ENCODE measurements at regions of chr15 and their contacts with region 1.

Region 1: DNA sequence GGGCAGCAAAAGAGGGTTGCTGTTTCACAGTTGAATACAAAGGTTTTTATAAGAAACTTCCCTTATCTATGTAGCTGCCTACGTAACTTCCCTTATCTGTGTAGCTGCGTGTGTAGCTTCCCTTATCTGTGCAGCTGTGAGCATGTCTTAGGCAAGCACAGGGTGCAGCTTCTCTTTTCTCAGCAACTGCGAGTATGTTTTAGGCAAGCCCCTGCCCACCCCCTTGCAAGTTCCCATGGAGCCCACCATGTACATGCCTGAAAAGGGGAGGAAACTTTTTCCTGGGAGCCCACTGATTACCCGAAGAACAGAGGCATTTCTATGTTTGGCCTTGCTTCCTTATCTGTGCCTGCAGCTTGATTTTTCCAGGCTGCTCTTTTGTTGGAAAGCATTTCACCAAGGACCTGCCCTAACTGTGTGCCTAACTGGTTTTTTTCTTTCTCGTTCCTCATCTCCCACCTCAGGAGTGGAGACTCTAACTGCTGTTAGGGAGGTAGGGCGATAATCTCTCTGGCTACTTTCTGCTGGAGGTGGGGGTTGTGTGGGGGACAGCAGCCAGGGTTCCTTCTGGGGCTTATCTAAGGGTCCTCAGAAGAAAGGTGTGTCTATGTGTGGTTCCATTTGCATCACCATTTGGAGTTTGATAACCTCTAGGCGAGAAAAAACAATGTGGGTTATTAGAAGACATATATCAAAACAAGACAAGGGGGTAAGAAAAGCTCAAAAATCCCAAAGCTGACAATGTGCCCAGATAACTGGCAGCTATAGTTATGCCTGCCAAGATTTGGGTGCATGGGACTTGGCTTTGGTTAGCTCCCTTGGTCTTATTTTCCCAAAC is 26.0 kb downstream of the SORD start:
- DNase-seq: no peak
- ATAC-seq: peak; percentile 87
- H3K4me3 Mint-ChIP-seq: peak overlapping the region; percentile 78
- H3K27ac Mint-ChIP-seq: peak overlapping the region; percentile 98
- H3K4me1 Mint-ChIP-seq: peaks cover 39% of the 10 kb centered on the region
- H3K27me3 Mint-ChIP-seq: no peaks in the 10 kb centered on the region
- CTCF ChIP-seq: no peak

Region 2: GRCh38 chr15:45022871-45023658 is 25.9 kb before region 1 on chr15 and contains the start of gene SORD:
- CTCF ChIA-PET with region 1: no interaction called
- POLR2A ChIA-PET with region 1: interaction called, 12 read pairs
- intact Hi-C with region 1: loop called (anchors 1 kb)
- DNase-seq: peak; percentile 91
- ATAC-seq: peak; percentile 100
- H3K4me3 Mint-ChIP-seq: peak within 1 kb of the TSS; percentile 89
- H3K27ac Mint-ChIP-seq: no peak within 1 kb of the TSS
- H3K4me1 Mint-ChIP-seq: peaks cover 27% of the 10 kb centered on the region
- H3K27me3 Mint-ChIP-seq: peaks cover 15% of the 10 kb centered on the region
- CTCF ChIP-seq: no peak
- total RNA-seq, gene SORD: 15.1 and 15.5 TPM in 2 replicates

Region 3: GRCh38 chr15:45037936-45038335 is 11.1 kb before region 1 on chr15:
- CTCF ChIA-PET with region 1: no interaction called
- POLR2A ChIA-PET with region 1: interaction called, 10 read pairs
- intact Hi-C with region 1: no loop called
- DNase-seq: no peak
- ATAC-seq: no peak
- H3K4me3 Mint-ChIP-seq: no peak overlapping the region
- H3K27ac Mint-ChIP-seq: peak overlapping the region; percentile 31
- H3K4me1 Mint-ChIP-seq: peaks cover 35% of the 10 kb centered on the region
- H3K27me3 Mint-ChIP-seq: no peaks in the 10 kb centered on the region
- CTCF ChIP-seq: no peak

Region 4: DNA sequence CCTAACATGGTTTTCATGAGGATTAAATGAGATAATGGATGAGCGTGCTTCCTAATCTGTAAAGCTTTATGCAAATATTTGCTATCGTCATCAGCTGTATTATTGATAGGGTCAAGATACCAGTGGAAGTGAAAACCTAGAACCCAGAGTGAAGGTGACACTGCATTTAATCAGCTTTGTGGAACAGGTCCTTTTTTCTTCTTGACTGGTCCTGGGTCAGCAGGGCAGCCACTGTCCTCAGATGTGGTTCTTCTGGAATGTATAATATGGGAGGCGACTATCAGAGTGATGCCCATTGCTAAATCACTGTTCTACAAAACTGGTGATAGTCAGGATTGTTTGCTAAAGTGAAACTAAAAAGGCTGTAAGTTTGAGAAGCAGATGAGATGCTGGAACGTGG is 15.4 kb after region 1 on chr15:
- CTCF ChIA-PET with region 1: no interaction called
- POLR2A ChIA-PET with region 1: no interaction called
- intact Hi-C with region 1: no loop called
- DNase-seq: no peak
- ATAC-seq: no peak
- H3K4me3 Mint-ChIP-seq: no peak overlapping the region
- H3K27ac Mint-ChIP-seq: no peak overlapping the region
- H3K4me1 Mint-ChIP-seq: peaks cover 10% of the 10 kb centered on the region
- H3K27me3 Mint-ChIP-seq: no peaks in the 10 kb centered on the region
- CTCF ChIP-seq: no peak

Region 5: GRCh38 chr15:45391746-45392583 is 343.0 kb after region 1 on chr15:
- CTCF ChIA-PET with region 1: no interaction called
- POLR2A ChIA-PET with region 1: no interaction called
- intact Hi-C with region 1: loop called (anchors 5 kb)
- DNase-seq: no peak
- ATAC-seq: peak; percentile 93
- H3K4me3 Mint-ChIP-seq: peak overlapping the region; percentile 30
- H3K27ac Mint-ChIP-seq: peak overlapping the region; percentile 80
- H3K4me1 Mint-ChIP-seq: peaks cover 22% of the 10 kb centered on the region
- H3K27me3 Mint-ChIP-seq: no peaks in the 10 kb centered on the region
- CTCF ChIP-seq: no peak

Region 6: DNA sequence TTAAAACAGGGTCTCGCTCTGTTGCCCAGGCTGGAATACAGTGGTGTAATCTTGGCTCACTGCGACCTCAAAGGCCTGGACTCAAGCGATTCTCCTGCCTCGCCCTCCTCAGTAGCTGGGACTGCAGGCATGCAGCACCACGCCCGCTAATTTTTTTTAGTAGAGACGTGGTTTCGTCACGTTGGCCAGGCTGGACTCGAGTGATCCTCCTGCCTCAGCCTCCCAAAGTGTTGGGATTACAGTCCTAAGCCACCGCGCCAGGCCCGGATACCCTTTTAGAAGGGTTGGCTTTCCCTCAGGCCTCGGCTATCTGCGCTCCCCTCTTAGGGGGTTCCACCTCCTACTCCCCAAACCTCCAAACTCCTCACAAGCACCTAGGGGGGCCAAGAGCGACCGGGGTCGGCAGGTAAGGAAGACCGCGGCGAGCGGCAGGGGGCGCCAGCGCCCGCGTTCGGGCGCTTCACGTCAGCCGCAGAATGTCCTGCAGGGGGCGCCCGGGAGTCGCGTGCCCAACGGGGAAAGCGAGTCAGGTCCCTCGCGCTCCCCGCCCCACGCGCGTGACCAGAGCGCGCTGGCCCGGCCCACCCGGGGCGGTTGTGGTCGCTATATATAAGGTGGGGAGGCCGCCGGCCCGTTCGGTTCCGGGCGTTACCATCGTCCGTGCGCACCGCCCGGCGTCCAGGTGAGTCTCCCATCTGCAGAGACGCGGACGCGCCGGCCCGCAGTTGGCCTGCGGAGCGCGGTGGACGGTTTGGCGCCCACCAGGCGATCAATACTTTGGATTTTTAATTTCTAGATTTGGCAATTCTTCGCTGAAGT is 381.2 kb after region 1 on chr15:
- CTCF ChIA-PET with region 1: no interaction called
- POLR2A ChIA-PET with region 1: no interaction called
- intact Hi-C with region 1: no loop called
- DNase-seq: peak; percentile 87
- ATAC-seq: peak; percentile 94
- H3K4me3 Mint-ChIP-seq: peak overlapping the region; percentile 35
- H3K27ac Mint-ChIP-seq: no peak overlapping the region
- H3K4me1 Mint-ChIP-seq: peaks cover 4% of the 10 kb centered on the region
- H3K27me3 Mint-ChIP-seq: peaks cover 2% of the 10 kb centered on the region
- CTCF ChIP-seq: peak; percentile 98